ENCODE measurements at regions of chr3 and their contacts with region 1.

Region 1: DNA sequence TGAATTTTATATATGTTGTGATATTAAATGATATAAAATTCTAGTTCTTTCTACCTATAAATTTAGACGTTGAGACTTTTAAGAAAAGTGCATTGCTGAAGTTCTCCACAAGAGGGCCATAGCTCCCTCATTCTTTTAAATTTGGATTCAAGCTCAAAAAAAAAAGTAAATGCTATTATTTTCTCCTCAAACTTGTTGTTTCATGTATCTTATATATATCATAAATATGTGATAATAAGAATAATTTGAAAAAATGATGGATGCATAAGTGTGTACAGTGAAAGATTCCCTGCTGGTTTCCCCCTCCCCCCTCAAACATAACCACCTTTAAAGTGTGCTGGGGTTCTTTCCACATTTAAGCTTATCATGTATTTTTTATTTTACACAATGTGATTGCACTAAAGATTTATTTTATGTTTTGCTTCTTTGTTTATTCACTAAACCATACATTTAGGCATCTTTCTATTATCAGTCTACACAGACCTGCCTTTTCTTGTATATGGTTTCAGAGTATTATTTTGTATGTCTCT is 769.4 kb upstream of the GOLIM4 start:
- DNase-seq: peak; percentile 80
- ATAC-seq: no peak
- H3K4me3 ChIP-seq: no peak overlapping the region
- H3K27ac ChIP-seq: no peak overlapping the region
- H3K4me1 ChIP-seq: peaks cover 7% of the 10 kb centered on the region
- H3K27me3 ChIP-seq: no peaks in the 10 kb centered on the region
- CTCF ChIP-seq: peak; percentile 82

Region 2: GRCh38 chr3:168071591-168072322 is 793.3 kb before region 1 on chr3:
- CTCF ChIA-PET with region 1: no interaction called
- POLR2A ChIA-PET with region 1: interaction called, 22 read pairs
- intact Hi-C with region 1: no loop called
- DNase-seq: peak; percentile 88
- ATAC-seq: peak; percentile 97
- H3K4me3 ChIP-seq: peak overlapping the region; percentile 14; the same call in 1 of the 2 replicates
- H3K27ac ChIP-seq: peak overlapping the region; percentile 67
- H3K4me1 ChIP-seq: peaks cover 23% of the 10 kb centered on the region
- H3K27me3 ChIP-seq: no peaks in the 10 kb centered on the region
- CTCF ChIP-seq: no peak

Region 3: GRCh38 chr3:168889666-168890065 is 24.6 kb after region 1 on chr3:
- CTCF ChIA-PET with region 1: interaction called, 13 read pairs
- POLR2A ChIA-PET with region 1: no interaction called
- intact Hi-C with region 1: loop called (anchors 1 kb)
- DNase-seq: peak; percentile 61
- ATAC-seq: no peak; the same call in 1 of the 2 replicates
- H3K4me3 ChIP-seq: no peak overlapping the region
- H3K27ac ChIP-seq: no peak overlapping the region
- H3K4me1 ChIP-seq: peaks cover 20% of the 10 kb centered on the region
- H3K27me3 ChIP-seq: no peaks in the 10 kb centered on the region
- CTCF ChIP-seq: peak; percentile 67

Region 4: GRCh38 chr3:169041677-169042171 is 176.6 kb after region 1 on chr3:
- CTCF ChIA-PET with region 1: interaction called, 4 read pairs
- POLR2A ChIA-PET with region 1: no interaction called
- intact Hi-C with region 1: loop called (anchors 5 kb)
- DNase-seq: peak; percentile 64
- ATAC-seq: 0 out of 2 replicates have a peak, but pooled peaks have one; percentile 9
- H3K4me3 ChIP-seq: peak overlapping the region; percentile 24; the same call in 1 of the 2 replicates
- H3K27ac ChIP-seq: no peak overlapping the region
- H3K4me1 ChIP-seq: peaks cover 33% of the 10 kb centered on the region
- H3K27me3 ChIP-seq: no peaks in the 10 kb centered on the region
- CTCF ChIP-seq: peak; percentile 81

Region 5: DNA sequence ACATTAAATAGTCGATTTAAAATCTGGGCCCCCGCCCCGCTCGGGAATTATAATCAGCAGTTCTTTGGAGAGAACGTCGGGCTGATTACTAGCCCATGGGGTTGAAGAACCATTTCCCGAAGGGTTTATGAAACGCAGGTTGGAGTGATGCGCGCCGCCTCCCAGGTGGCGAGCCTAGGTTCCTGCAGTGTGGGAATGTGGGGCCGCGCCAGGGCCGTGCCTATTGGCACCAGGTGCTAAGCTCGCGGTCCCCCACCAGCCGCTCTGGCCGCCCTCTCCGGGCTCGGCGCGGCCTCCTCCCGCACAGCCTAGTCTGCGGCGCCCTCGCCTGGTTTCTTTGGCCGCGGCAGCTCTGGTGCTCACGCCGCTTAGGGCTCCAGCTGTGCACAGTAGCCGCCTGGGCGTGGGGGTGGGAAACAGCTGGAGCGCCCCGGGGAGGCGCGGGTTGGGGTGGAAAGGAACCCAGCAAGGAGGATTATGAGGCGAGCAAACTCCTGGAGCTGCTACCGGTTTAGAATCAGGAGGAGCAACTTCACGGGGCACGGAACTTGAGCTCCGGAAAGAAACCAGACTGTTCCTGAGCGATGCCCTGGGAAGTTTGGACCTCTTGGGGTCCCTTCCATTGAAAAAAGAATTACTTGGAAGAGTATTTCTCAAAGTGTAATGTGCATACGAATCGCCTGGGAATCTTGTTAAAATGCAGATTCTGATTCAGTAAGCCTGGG is 804.0 kb after region 1 on chr3:
- CTCF ChIA-PET with region 1: no interaction called
- POLR2A ChIA-PET with region 1: no interaction called
- intact Hi-C with region 1: loop called (anchors 5 kb)
- DNase-seq: peak; percentile 86
- ATAC-seq: peak; percentile 91
- H3K4me3 ChIP-seq: peak overlapping the region; percentile 75
- H3K27ac ChIP-seq: no peak overlapping the region
- H3K4me1 ChIP-seq: peaks cover 6% of the 10 kb centered on the region; the same call in 1 of the 2 replicates
- H3K27me3 ChIP-seq: no peaks in the 10 kb centered on the region
- CTCF ChIP-seq: peak; percentile 94

Measured in PC-3 (cell line).